HEK293T (cell line): ENCODE measurements at regions of chr22 and their contacts with region 1.

Region 1: DNA sequence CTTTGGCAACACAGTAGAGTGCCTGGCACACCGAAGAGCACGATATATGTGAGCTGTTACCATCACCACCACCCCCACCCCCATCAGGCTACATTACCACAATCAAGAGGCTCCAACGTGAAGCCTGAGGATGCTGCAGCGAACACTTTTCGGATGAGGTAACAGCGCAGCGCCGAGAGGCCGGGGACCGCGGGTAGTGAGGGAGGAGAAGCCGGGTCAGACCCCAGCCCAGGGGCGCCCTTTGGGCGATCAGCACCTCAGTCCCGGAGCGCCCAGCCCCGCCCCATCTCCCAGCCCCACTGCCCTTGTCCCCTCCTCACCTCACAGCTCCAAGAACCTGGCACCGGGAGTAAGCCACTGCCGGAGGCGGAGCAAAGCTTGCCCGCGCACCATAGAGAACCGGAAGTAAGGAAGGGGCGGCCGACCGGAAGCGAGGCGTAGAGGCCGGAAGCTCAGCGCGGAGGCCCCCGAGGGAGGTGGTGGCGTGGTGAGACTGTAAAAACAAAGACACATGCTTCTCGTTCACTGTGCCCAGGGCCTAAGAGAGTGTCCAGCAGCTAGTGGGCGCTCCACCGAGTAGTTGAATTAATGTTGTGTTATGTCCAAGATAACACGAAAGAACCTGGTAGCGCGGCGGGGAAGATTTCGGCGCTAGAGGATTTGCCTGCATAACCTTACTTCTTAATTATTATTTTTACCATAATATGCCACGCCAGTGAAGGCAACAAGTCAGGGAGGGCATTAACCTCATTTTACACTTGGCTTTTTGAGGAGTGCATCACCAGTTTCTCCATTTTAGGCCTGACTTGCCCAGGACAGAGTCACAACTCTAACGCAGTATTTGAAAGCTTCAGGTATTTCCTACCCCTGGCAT is at the start of gene THOC5:
- DNase-seq: peak; percentile 99

Region 2: DNA sequence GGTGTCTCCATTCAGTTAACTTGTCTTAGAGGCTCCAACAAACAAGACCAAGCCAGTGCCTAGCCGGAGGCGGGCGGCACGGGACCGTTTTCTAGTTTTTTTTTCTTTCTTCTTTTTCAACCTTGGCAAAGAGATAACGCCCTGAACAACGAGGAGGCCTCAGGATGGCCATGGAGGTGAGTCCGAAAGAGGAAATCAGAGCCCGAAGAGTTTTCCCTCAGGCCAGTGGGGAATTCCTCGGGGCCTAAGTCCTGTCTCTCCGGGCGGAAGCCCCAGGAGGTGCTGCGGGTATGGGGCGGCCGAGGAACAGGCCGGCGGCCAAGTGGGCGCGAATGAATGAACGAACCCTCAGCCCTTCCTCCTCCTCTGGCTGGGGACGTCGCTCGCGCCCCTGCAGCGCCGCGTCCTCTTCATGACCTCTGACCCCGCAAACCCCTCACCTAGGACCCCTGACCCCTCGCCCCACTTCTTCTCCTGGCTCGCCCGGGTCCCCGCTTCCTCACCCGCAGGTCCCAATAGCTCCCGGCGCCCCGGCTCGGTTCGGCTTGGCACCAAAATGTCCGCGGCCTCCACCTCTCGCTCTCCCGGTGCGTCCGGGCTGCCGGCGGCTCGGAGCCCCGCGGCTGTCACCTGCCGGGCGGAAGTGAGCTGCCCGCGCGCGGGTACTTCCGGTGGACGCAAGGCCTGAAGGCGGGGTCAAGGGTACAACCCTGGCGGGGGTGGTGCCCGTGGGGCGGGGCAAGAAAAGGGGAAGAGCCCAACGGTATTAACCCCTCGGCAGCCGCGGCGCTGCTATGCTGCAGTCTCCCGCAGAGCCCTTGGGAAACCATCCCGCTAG is 165.4 kb before region 1 on chr22 and contains the start of gene AP1B1:
- CTCF ChIA-PET with region 1: no interaction called
- POLR2A ChIA-PET with region 1: interaction called, 12 read pairs
- DNase-seq: peak; percentile 100

Region 3: GRCh38 chr22:29443452-29443851 is 110.1 kb before region 1 on chr22:
- CTCF ChIA-PET with region 1: no interaction called
- POLR2A ChIA-PET with region 1: no interaction called
- DNase-seq: no peak

Region 4: DNA sequence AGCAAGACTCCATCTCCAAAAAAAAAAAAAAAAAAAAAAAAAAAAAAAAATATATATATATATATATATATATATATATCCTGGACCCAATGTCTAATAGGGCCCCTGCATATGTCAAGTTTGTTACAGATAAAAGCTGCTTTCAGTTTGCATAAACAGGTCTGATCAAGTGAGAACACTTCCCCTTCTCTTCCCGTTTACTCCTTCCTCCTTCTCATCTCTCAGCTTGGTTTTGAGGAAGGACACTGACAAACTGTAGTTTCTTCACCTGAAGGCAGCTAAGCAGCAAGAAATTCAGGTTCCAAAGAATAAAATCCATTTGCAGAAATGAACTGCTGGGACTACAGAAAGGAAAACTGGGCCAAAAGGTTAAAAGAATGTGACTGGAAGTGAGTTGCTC is 11.7 kb before region 1 on chr22:
- CTCF ChIA-PET with region 1: interaction called, 3 read pairs
- POLR2A ChIA-PET with region 1: interaction called, 30 read pairs
- DNase-seq: no peak

Region 5: GRCh38 chr22:29563652-29564460 is 10.3 kb after region 1 on chr22:
- CTCF ChIA-PET with region 1: no interaction called
- POLR2A ChIA-PET with region 1: interaction called, 11 read pairs
- DNase-seq: no peak